ENCODE measurements at regions of chr3 and their contacts with region 1.

Region 1: DNA sequence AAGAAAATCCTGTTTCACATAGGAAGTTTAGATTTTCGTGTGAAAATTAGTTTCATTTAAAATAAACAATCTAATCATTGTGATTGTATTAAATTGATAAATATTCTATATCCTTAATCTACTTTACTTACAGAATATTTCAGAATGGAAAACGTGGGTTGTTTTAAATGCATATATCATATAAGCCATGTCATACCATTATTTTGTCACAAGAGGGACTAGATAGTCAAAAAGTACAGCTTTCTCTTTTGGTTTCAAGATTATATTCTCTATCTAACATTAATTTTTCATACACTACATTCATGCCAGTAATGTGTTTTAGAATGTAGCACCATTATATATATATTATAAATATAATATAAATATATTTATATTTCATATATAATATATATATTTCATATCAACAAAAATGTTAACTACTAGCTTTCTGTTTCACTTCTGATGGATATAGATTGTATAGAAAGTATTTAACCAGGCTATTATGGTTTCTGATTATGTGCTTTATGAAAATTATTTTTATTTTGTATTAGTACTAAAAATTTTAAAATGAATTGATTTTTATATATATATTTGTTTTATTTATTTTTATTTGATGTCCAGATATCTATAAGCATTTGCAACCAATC is 45.3 kb downstream of the OSTN start:
- DNase-seq: no peak
- H3K4me3 ChIP-seq: no peak overlapping the region
- CTCF ChIP-seq: peak; percentile 27

Region 2: GRCh38 chr3:191269289-191270085 is 25.1 kb after region 1 on chr3:
- CTCF ChIA-PET with region 1: no interaction called
- POLR2A ChIA-PET with region 1: no interaction called
- DNase-seq: no peak
- H3K4me3 ChIP-seq: no peak overlapping the region
- CTCF ChIP-seq: no peak

Region 3: DNA sequence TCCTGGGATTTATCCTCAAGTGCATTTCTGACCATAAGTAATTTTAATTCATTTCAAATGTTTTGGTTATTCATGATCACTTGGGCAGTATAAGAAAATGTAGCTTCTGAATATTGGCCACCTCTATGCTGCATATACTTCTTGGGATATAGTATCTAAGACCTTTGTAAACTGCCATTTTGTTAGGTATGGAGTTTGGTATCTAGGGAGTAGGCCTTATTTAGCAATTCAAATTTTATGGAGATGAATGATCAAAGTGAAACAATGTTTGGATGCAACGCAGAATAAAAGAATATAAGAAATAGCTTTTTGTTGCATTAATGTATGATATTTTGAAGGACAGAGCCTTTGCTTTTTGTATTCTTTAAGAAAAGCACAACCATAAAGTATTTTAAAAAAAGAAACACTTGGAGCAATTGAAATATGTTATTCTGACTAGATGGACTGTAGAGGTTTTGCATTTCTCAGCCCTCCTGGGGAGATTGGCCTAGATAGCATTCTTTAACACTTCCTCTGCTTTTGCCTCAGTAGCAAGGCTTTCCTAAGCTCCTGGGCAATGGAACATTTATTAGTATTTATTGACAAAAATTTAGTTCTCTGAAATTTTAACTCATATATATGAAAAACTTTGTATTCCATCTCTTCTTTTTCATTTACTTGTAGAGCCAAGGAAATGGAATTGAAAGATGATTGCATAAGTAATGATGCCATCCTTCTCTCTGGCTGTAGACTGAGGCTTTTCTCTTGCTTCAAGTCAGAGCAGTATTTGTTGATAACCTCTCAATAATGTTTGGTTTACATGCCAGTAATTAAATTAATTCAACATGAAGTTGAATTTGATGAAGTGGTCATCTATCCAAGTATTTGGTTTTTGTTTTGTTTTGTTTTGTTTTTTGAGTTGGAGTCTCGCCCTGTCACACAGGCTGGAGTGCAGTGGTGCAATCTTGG is 147.8 kb after region 1 on chr3:
- CTCF ChIA-PET with region 1: interaction called, 15 read pairs
- POLR2A ChIA-PET with region 1: no interaction called
- DNase-seq: no peak
- H3K4me3 ChIP-seq: no peak overlapping the region
- CTCF ChIP-seq: no peak

Measured in AG04449 (cell line).